ENCODE measurements at regions of chr16 and their contacts with region 1.

Region 1: GRCh38 chr16:31142109-31143010 is 6.8 kb upstream of the PRSS8 start:
- DNase-seq: peak; percentile 100
- ATAC-seq: peak; percentile 96
- H3K4me3 Mint-ChIP-seq: peak overlapping the region; percentile 62
- H3K27ac Mint-ChIP-seq: peak overlapping the region; percentile 80
- H3K4me1 Mint-ChIP-seq: peaks cover 12% of the 10 kb centered on the region
- H3K27me3 Mint-ChIP-seq: no peaks in the 10 kb centered on the region

Region 2: GRCh38 chr16:30761928-30762810 is 380.2 kb before region 1 on chr16 and contains the starts of genes CFAP119 and RNF40:
- CTCF ChIA-PET with region 1: no interaction called
- POLR2A ChIA-PET with region 1: no interaction called
- intact Hi-C with region 1: no loop called
- DNase-seq: peak; percentile 94
- ATAC-seq: peak; percentile 98
- H3K4me3 Mint-ChIP-seq: peak within 1 kb of the TSS; percentile 90
- H3K27ac Mint-ChIP-seq: peak within 1 kb of the TSS; percentile 83
- H3K4me1 Mint-ChIP-seq: peaks cover 25% of the 10 kb centered on the region
- H3K27me3 Mint-ChIP-seq: no peaks in the 10 kb centered on the region
- total RNA-seq, gene CFAP119: 1.7 to 3.1 TPM
- total RNA-seq, gene RNF40: 72.3 to 85.5 TPM

Region 3: DNA sequence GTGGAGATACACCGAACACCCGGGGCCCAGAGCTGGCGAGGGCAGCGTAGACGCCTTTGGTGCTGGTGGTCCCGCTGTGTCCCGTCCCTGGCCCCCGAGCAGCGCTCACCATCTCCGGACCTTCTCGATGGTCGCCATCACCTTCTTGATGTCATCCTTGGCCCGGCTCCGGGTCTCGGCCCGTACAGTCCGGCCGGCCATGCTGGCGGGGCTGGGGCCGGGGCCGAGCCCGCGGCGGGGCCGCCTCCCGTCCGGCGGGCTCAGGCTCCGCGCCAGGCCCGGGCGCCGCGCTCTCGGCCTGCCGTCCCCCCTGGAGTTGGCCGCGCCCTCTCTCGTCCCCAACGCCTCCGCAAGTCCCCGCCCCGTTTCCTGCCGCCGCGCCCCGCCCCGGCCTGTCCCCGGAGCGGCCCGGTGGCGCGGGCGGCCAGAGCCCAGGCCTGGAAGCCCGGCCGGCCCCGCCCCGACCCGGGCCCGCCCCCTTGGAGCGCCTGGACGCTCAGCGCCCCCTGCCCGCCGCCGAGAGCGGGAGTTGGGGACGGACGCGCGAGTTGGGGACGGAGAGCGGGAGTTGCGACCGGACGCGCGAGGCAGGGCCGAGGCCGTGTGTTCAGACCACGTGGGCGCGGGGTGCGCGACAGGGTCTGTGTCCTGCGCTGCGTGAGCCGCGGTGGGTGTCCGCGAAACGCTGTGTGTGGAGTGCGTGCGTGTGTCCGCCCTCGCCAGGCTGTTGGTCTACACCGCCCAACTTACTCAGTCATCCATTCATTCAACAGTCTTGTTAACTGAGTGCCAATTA is 248.4 kb before region 1 on chr16 and contains the start of gene BCL7C:
- CTCF ChIA-PET with region 1: no interaction called
- POLR2A ChIA-PET with region 1: no interaction called
- intact Hi-C with region 1: loop called in 1 of 2 experiments (anchors 1 kb)
- DNase-seq: peak; percentile 92
- ATAC-seq: peak; percentile 74
- H3K4me3 Mint-ChIP-seq: peak within 1 kb of the TSS; percentile 84
- H3K27ac Mint-ChIP-seq: peak within 1 kb of the TSS; percentile 88
- H3K4me1 Mint-ChIP-seq: peaks cover 35% of the 10 kb centered on the region
- H3K27me3 Mint-ChIP-seq: no peaks in the 10 kb centered on the region
- total RNA-seq, gene BCL7C: 19.5 to 20.4 TPM

Region 4: DNA sequence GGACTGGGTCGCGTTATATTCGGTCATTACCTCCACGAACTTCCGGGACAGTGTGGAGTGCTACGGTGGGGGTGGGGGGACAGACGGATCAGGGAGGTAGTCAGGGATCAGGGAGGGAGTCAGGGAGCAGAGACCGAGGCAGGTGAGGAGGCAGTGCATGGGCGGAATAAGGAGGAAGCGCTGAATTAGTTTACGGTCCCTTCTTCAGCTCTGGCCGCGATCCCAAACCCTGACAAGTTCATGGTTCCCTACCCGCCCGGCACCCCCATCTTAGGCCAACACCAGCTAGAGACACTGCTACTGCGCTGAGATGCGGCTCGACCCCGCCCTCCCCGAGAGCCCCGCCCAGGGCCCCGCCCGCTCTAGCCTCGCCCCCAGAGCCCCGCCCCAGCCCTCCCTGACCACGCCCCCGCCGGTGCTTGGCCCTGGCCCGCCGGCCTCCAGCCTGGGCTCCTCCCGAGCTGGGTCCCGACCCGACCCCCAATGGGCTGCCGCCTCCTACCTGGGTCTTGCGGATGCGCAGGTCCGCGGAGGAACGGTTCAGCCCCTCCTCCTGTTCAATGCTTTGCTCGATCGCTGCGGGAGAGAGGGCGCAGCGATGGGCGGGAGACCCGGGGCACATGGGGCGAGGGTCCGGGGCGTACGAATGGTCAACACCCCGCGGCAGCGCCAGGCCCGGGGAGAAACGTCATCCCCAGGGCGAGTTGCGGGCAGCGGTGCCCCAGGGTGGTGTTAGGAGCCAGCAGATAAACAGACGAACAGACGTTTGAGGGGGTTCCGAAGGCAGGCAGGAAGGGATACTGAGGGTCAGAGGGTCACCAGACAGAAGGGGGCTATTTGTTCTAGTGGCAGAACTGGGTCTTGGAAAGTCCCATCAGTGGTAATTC is 145.1 kb before region 1 on chr16:
- CTCF ChIA-PET with region 1: interaction called, 3 read pairs
- POLR2A ChIA-PET with region 1: no interaction called
- intact Hi-C with region 1: loop called (anchors 1 to 10 kb)
- DNase-seq: peak; percentile 94
- ATAC-seq: peak; percentile 95
- H3K4me3 Mint-ChIP-seq: peak overlapping the region; percentile 72
- H3K27ac Mint-ChIP-seq: no peak overlapping the region
- H3K4me1 Mint-ChIP-seq: peaks cover 16% of the 10 kb centered on the region
- H3K27me3 Mint-ChIP-seq: peaks cover 3% of the 10 kb centered on the region

Region 5: DNA sequence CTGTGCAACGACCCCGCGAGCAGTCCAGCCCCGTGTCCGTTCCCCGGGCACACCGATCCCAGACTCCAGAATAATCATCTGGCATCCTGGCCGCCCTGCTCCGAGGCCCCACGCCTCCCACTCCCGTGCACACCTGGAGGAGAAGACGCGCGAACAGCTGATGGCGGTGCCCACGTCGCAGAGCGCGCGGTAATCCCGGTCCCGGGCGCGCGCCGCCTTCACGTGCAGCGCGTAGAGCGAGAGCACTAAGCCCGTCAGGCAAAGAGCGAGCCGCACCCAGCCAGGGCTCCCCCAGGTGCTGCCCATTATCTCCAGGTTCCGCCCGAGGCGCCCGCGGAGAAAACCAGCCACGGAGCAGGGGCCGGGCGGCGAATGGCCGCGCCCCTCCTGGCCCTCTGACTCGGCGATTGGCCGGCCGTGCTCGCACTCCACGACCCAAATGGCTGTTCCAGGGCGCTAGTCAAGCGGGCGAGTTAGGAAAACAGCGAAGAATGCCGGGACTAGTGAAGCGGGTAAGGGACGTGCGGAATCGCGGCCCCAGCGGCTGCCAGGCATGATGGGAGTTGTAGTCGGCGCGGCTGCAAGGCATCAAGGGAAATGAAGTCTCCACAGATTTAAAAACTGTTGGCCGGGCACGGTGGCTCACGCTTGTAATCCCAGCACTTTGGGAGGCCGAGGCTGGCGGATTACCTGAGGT is 47.8 kb before region 1 on chr16 and contains the start of gene VKORC1:
- CTCF ChIA-PET with region 1: interaction called, 10 read pairs
- POLR2A ChIA-PET with region 1: no interaction called
- intact Hi-C with region 1: loop called (anchors 1 kb)
- DNase-seq: peak; percentile 96
- ATAC-seq: peak; percentile 92
- H3K4me3 Mint-ChIP-seq: peak within 1 kb of the TSS; percentile 98
- H3K27ac Mint-ChIP-seq: peak within 1 kb of the TSS; percentile 89
- H3K4me1 Mint-ChIP-seq: peaks cover 25% of the 10 kb centered on the region
- H3K27me3 Mint-ChIP-seq: no peaks in the 10 kb centered on the region
- total RNA-seq, gene VKORC1: 59.6 to 64.2 TPM

Region 6: GRCh38 chr16:31117391-31118197 is 24.8 kb before region 1 on chr16 and contains the start of gene KAT8:
- CTCF ChIA-PET with region 1: interaction called, 28 read pairs
- POLR2A ChIA-PET with region 1: interaction called, 26 read pairs
- intact Hi-C with region 1: loop called (anchors 1 kb)
- DNase-seq: peak; percentile 99
- ATAC-seq: peak; percentile 93
- H3K4me3 Mint-ChIP-seq: peak within 1 kb of the TSS; percentile 88
- H3K27ac Mint-ChIP-seq: peak within 1 kb of the TSS; percentile 83
- H3K4me1 Mint-ChIP-seq: peaks cover 14% of the 10 kb centered on the region
- H3K27me3 Mint-ChIP-seq: no peaks in the 10 kb centered on the region
- total RNA-seq, gene KAT8: 53.6 to 63.1 TPM

Region 7: DNA sequence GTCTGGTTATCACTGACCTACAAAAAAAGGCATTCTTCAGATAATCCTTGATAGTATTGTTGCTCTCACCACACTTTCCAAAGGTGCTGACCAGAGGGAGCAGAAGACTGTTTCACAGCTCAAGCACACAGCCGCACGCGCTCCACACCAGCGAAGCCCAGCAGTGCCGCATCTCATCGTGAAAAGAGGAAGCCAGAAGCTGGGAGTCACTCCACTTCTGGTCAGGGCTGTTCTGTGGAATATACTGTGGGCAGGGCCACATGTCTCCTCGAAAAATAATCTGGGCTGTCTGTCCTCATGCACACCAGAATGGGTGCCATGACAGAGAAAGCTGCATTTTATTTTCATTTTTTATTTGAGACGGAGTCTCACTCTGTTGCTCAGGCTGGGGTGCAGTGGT is 14.8 kb after region 1 on chr16:
- CTCF ChIA-PET with region 1: interaction called, 37 read pairs
- POLR2A ChIA-PET with region 1: no interaction called
- intact Hi-C with region 1: no loop called
- DNase-seq: no peak
- ATAC-seq: no peak
- H3K4me3 Mint-ChIP-seq: no peak overlapping the region
- H3K27ac Mint-ChIP-seq: no peak overlapping the region
- H3K4me1 Mint-ChIP-seq: peaks cover 7% of the 10 kb centered on the region
- H3K27me3 Mint-ChIP-seq: no peaks in the 10 kb centered on the region

Region 8: DNA sequence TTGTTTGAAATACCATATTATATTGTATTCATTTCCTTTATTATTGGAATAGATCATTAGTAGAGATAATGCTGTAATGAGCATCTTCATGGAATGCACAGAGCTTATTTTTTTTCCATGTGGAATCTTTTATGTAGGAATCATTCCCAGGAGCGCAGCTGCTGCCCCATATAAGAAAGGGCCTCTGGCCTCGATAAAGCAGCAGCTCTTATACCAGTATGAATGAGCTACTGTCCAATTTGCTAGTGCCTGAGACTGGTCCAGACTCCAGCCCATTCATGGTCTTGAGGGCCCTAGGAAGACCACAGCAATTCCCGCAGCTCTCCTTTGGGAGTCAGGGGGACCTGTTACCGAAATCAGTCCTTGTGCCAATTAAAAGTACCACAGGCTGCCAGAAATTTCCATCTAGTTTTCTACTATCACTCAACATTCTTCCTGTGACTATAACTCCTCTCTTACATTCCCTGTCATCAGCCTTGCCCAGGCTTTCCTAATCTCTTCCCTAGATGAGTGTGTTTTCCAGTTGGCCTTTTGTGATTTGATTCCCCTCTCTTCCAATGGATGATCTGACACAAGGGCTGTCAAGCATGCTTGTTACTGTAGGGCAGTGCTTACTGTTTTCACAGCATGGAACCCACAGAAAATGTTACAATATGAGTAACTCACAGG is 298.3 kb after region 1 on chr16:
- CTCF ChIA-PET with region 1: interaction called, 4 read pairs
- POLR2A ChIA-PET with region 1: no interaction called
- intact Hi-C with region 1: loop called in 1 of 2 experiments (anchors 1 kb)
- DNase-seq: no peak
- ATAC-seq: no peak
- H3K4me3 Mint-ChIP-seq: no peak overlapping the region
- H3K27ac Mint-ChIP-seq: no peak overlapping the region
- H3K4me1 Mint-ChIP-seq: peaks cover 18% of the 10 kb centered on the region
- H3K27me3 Mint-ChIP-seq: peaks cover 2% of the 10 kb centered on the region